GM10248 (cell line): ENCODE measurements at regions of chr14 and their contacts with region 1.

Region 1: DNA sequence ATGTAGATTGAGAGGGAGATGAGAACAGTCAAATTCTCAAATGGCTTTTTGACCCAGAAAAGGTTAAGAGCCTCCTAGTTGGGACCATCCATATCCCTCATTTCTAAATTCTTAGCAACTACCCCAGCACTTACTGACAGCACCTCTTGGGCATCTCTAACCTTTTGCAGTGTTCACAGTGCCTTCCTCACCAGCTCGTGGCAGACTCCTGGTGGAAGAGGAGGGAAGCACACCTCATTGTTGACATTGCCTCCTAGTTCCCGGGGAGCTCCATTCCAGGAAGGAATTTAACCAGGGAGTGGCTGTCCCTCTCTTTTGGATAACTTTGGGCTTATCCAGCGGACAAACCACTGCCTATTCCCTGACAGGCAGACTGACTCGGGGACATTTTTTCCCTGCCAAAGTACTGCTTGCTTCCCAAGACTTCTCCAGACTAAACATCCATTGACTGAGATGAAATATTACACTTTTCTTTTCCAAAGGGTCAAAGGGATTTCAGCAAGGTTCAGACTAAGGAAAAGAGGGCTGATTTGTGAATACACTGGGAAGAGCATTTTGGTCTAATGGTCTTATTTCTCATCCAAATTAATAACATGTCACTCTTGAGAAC is 9.0 kb upstream of the OR6J1 start:
- DNase-seq: peak; percentile 68
- CTCF ChIP-seq: peak; percentile 81

Region 2: DNA sequence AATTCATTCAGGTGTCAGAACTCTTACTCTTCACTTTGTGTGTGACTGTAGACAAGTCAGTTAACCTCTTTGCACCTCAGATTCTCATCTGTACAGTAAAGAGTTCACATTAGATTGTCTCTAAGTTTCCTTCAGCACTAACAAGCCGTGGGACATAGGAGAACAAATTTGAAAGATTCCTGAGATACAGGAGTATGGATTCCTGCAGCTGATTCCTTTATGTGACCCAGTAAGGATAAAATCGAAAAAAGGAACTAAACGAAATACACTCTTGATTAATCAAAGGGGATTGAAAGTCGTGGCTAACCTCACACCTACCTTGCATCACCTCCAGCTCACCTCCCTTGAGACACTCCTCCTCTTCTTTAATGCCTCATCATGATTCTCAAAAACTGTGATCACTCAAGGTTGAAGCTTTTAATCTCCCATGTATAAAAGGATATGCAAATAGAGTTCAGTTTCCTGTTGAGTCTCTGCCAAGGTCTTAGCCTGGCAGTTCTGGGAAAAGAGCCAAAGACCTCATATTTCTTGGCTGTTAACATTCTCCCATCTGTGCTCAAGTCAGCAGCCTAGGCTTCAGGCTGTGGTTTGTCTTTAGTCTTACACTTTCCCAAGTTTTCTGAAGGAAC is 220.7 kb before region 1 on chr14:
- CTCF ChIA-PET with region 1: no interaction called
- POLR2A ChIA-PET with region 1: no interaction called
- DNase-seq: no peak
- CTCF ChIP-seq: no peak

Region 3: GRCh38 chr14:22598099-22598899 is 54.8 kb before region 1 on chr14 and contains the start of gene ABHD4:
- CTCF ChIA-PET with region 1: interaction called, 12 read pairs
- POLR2A ChIA-PET with region 1: no interaction called
- DNase-seq: peak; percentile 87
- CTCF ChIP-seq: no peak

Region 4: GRCh38 chr14:22641846-22642245 is 11.3 kb before region 1 on chr14:
- CTCF ChIA-PET with region 1: interaction called, 35 read pairs
- POLR2A ChIA-PET with region 1: no interaction called
- DNase-seq: no peak
- CTCF ChIP-seq: no peak